ENCODE measurements at regions of chr7 and their contacts with region 1.

Region 1: DNA sequence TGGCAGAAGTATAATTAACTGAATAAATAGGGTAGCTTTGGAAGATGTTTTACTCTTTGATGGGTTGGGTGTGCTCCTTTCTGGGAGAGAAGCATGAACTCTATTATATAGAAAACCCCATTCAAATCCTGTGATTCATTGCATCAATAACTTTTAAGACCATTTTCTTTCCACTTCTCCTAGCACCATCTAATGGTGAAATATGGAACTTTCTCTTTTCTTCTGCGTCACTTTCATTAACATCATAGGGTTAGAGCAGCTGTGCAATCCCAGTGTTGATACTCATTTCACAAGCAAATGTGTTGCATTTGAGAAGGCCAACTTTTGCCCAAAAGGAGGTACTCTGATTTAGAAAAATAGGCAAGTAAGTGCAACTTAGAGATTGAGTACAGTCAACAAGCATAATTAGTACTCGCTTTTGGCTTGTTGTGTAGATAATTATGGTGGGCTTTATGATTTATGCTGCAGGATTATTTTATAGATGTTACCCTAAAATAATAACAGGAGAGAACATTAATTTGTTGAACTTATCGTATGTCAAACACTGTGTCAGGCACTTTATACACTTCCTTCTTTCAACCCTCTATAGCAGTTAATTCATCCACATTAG is 92.9 kb downstream of the CPED1 start:
- DNase-seq: no peak
- H3K4me3 Mint-ChIP-seq: no peak overlapping the region
- H3K27ac Mint-ChIP-seq: no peak overlapping the region
- H3K4me1 Mint-ChIP-seq: no peaks in the 10 kb centered on the region
- H3K27me3 Mint-ChIP-seq: peaks cover 28% of the 10 kb centered on the region

Region 2: DNA sequence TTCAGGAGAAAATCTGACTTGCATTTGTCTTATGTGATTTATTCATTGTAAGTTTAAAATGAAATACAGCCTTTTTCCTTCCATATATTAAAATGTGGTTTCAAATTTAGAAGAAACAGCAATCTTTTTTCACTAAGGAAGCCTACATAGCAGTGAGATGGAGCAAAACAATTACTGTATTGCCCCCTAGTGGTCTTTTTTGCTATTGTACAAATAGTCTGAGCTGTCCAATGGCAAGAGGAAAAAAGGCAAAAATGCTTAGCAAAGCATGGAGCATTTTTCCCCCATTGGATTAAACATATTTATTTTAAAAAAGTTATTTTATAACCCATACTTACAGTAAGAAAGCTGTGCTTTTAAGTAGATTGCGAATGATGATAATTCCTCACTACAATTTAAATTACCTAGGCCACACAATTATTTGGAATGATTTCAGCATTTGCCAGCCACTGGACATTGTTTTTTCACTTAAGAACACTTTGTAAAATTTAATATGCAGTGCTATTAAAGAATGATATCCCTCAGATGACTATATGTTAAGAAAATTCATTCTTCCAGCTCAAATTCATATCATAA is 26.6 kb after region 1 on chr7:
- CTCF ChIA-PET with region 1: interaction called, 16 read pairs
- POLR2A ChIA-PET with region 1: no interaction called
- intact Hi-C with region 1: no loop called
- DNase-seq: no peak
- H3K4me3 Mint-ChIP-seq: no peak overlapping the region
- H3K27ac Mint-ChIP-seq: no peak overlapping the region
- H3K4me1 Mint-ChIP-seq: no peaks in the 10 kb centered on the region
- H3K27me3 Mint-ChIP-seq: peaks cover 6% of the 10 kb centered on the region

Measured in activated CD4-positive, alpha-beta memory T cell treated with anti-CD3 and anti-CD28 coated beads for 36 hours (primary cell).